ENCODE measurements at regions of chr5 and their contacts with region 1.

Region 1: DNA sequence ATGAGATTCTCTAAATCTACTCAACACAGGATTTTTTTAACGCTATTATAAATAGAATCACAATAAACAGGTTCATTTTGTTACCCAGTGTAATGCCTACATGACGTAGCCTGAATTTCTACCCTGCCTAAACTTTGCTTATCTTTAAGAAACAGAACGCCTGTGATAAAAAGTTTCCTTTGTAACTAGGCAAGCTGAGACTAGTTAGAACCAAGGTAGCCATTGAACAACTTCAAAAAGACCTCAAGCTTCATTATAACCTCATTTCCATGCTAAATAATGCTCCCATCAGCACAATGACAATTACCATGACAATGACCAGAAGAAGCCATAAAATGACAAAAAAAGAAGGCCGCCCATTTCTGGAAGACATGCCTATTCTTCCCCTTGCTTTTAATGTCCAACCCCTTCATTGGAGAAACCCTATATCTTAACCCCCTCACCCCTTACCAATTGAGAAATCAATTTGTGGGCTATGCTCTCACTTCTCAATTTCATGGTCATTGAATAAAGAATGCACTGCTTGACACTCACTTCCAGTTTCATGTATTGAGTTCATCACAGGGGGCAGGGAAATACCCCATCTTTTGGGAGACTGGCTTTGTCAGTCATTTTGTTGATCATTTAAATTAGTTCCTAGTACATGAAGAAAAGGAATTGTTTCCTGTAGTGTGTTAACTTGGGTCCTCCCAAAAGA is 276.8 kb downstream of the MCTP1 start:
- DNase-seq: no peak
- ATAC-seq: peak; percentile 90
- H3K4me3 ChIP-seq: no peak overlapping the region
- H3K27ac ChIP-seq: peak overlapping the region; percentile 54; the same call in 1 of the 2 replicates
- H3K4me1 ChIP-seq: peaks cover 7% of the 10 kb centered on the region; the same call in 1 of the 2 replicates
- H3K27me3 ChIP-seq: no peaks in the 10 kb centered on the region
- CTCF ChIP-seq: no peak
- EP300 ChIP-seq: peak in 1 of 2 experiments; percentile 48; a peak in 1 of 4 replicates
- POLR2A ChIP-seq: no peak
- RAD21 ChIP-seq: no peak

Region 2: DNA sequence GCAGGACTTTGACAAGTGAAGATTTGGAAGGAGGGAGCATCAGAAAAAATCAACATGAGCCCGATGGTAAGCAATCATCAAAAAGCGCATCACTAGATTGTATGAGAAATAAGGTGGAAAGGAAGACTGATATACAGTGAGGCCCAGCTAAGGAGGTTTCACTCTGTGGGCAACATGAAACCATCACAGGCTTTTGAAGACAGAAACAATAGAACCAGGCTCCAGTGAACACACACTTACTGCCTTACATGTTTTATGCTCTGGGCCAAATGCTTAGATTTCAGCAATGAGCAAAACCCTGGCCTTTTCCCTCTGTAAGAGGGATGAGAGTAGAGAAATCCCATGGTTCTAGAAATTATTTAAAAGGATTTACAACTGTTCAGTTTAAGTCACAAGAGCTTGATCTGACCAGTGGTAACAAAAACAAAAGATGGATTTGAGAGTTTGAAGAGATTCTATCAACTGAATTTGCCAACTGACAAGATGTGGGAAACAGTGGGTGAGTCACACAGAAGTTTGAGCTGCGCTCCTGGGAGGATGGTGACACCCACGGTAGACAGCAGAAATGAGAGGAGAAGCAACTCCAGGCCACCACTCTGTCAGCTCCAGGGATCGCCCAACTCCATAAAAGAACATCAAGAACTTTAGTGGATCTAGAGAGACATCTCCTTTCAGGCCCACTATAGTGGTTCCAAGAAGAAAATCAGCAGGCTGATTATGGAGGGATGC is 15.1 kb after region 1 on chr5:
- CTCF ChIA-PET with region 1: interaction called, 14 read pairs
- POLR2A ChIA-PET with region 1: interaction called, 9 read pairs
- RAD21 ChIA-PET with region 1: interaction called, 3 read pairs
- SMC1A ChIA-PET with region 1: interaction called, 14 read pairs
- in situ Hi-C with region 1: no loop called
- intact Hi-C with region 1: no loop called
- DNase-seq: peak; percentile 66
- ATAC-seq: peak; percentile 89
- H3K4me3 ChIP-seq: peak overlapping the region; percentile 32; the same call in 1 of the 2 replicates
- H3K27ac ChIP-seq: peak overlapping the region; percentile 40
- H3K4me1 ChIP-seq: peaks cover 30% of the 10 kb centered on the region
- H3K27me3 ChIP-seq: no peaks in the 10 kb centered on the region
- CTCF ChIP-seq: no peak
- EP300 ChIP-seq: no peak
- POLR2A ChIP-seq: no peak
- RAD21 ChIP-seq: no peak

Region 3: GRCh38 chr5:95178046-95178651 is 170.1 kb after region 1 on chr5:
- CTCF ChIA-PET with region 1: no interaction called
- POLR2A ChIA-PET with region 1: no interaction called
- RAD21 ChIA-PET with region 1: no interaction called
- SMC1A ChIA-PET with region 1: no interaction called
- in situ Hi-C with region 1: no loop called
- intact Hi-C with region 1: no loop called
- DNase-seq: peak; percentile 12
- ATAC-seq: peak; percentile 88
- H3K4me3 ChIP-seq: no peak overlapping the region
- H3K27ac ChIP-seq: no peak overlapping the region
- H3K4me1 ChIP-seq: no peaks in the 10 kb centered on the region
- H3K27me3 ChIP-seq: no peaks in the 10 kb centered on the region; a peak in 1 of 4 replicates
- CTCF ChIP-seq: peak in 2 of 3 experiments; percentile 16 to 28; a peak in 2 of 6 replicates
- EP300 ChIP-seq: no peak
- POLR2A ChIP-seq: no peak
- RAD21 ChIP-seq: 0 out of 2 replicates have a peak, but pooled peaks have one; percentile 6

Region 4: GRCh38 chr5:95261437-95262175 is 253.6 kb after region 1 on chr5:
- CTCF ChIA-PET with region 1: no interaction called
- POLR2A ChIA-PET with region 1: no interaction called
- RAD21 ChIA-PET with region 1: no interaction called
- SMC1A ChIA-PET with region 1: no interaction called
- in situ Hi-C with region 1: no loop called
- intact Hi-C with region 1: no loop called
- DNase-seq: no peak
- ATAC-seq: peak; percentile 78
- H3K4me3 ChIP-seq: no peak overlapping the region
- H3K27ac ChIP-seq: no peak overlapping the region
- H3K4me1 ChIP-seq: no peaks in the 10 kb centered on the region; the same call in 1 of the 2 replicates
- H3K27me3 ChIP-seq: peaks cover 0 to 2% of the 10 kb centered on the region in 2 experiments; a peak in 2 of 4 replicates
- CTCF ChIP-seq: peak; percentile 52 to 64 (median 53)
- EP300 ChIP-seq: no peak
- POLR2A ChIP-seq: no peak
- RAD21 ChIP-seq: peak; percentile 70

Measured in GM12878 (cell line).